ENCODE measurements at regions of chr12 and their contacts with region 1.

Region 1: DNA sequence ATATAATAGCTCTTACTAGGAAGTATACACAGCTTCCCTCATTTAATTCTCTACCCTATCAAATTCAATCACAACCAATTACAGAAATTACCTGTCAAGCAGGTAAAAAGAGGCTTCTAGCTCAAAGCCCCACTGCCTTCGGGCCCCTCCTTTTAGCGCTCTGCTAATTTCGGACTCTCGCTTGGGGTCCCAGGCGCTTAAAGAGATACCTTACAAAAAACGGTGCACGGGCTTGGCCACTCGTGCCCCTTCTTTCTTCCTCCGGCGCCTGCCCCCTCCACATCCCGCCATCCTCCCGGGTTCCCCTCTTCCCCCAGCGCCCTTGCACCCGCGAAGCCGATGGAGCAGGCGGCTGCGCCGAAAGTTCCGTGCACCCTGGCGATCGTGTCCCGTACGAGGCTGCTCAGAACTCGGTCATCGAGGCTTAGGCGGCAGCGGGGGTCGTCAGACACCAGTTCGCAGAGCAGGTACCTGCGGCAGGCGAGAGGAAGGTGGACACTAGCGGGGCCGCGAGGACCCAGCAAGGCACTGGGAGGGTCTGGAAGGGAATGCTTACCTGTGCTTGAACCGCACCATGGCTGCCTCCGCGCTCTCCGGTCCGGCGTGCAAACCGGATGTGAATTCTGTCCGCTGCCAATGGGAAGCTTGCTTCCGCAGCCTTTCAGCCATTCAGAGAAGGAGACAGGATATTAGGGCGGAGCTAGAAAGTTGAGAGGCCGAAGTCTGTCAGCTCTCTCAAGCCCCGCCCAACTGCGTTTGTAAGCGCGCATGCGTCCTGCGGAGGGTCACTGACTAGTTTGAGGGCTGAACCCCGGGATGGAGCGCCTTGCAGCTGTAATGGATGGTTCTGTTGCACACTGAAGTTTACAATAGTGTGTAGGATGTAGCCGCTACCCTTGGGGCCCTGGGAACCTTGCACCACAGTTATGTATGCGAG is at the start of gene POP5:
- DNase-seq: peak; percentile 90 to 98
- H3K4me3 ChIP-seq: peak within 1 kb of the TSS; percentile 63 to 87
- H3K27ac ChIP-seq: peak within 1 kb of the TSS; percentile 56 to 69
- H3K4me1 ChIP-seq: peaks cover 3% of the 10 kb centered on the region in 2 donors
- H3K27me3 ChIP-seq: no peaks in the 10 kb centered on the region
- CTCF ChIP-seq: no peak
- total RNA-seq, gene POP5: 3.0 TPM

Region 2: GRCh38 chr12:120495723-120496412 is 85.2 kb before region 1 on chr12 and contains the start of gene DYNLL1:
- intact Hi-C with region 1: loop called (anchors 2 kb)
- DNase-seq: peak; percentile 85 to 97
- H3K4me3 ChIP-seq: peak within 1 kb of the TSS; percentile 83 to 86
- H3K27ac ChIP-seq: peak within 1 kb of the TSS; percentile 82 to 86
- H3K4me1 ChIP-seq: peaks cover 6 to 9% of the 10 kb centered on the region in 2 donors
- H3K27me3 ChIP-seq: no peaks in the 10 kb centered on the region
- CTCF ChIP-seq: peak in 1 of 3 experiments; percentile 4
- total RNA-seq, gene DYNLL1: 216 TPM

Region 3: GRCh38 chr12:120598674-120599463 is 17.8 kb after region 1 on chr12:
- intact Hi-C with region 1: no loop called
- DNase-seq: no peak
- H3K4me3 ChIP-seq: no peak overlapping the region
- H3K27ac ChIP-seq: no peak overlapping the region
- H3K4me1 ChIP-seq: no peaks in the 10 kb centered on the region
- H3K27me3 ChIP-seq: no peaks in the 10 kb centered on the region
- CTCF ChIP-seq: no peak

Region 4: GRCh38 chr12:120649442-120650232 is 68.6 kb after region 1 on chr12:
- intact Hi-C with region 1: loop called (anchors 1 kb)
- DNase-seq: no peak
- H3K4me3 ChIP-seq: peak overlapping the region; percentile 48 to 65
- H3K27ac ChIP-seq: peak overlapping the region; percentile 52 to 64
- H3K4me1 ChIP-seq: peaks cover 12 to 33% of the 10 kb centered on the region in 2 donors
- H3K27me3 ChIP-seq: no peaks in the 10 kb centered on the region
- CTCF ChIP-seq: no peak

Region 5: GRCh38 chr12:120710031-120710804 is 129.2 kb after region 1 on chr12 and contains the start of gene UNC119B:
- intact Hi-C with region 1: loop called (anchors 1 kb)
- DNase-seq: peak in 1 of 2 donors; percentile 74
- H3K4me3 ChIP-seq: peak within 1 kb of the TSS; percentile 72 to 82
- H3K27ac ChIP-seq: peak within 1 kb of the TSS; percentile 72 to 86
- H3K4me1 ChIP-seq: peaks cover 0 to 9% of the 10 kb centered on the region in 2 donors
- H3K27me3 ChIP-seq: no peaks in the 10 kb centered on the region
- CTCF ChIP-seq: no peak
- total RNA-seq, gene UNC119B: 26.8 TPM

Region 6: GRCh38 chr12:120904197-120904773 is 323.2 kb after region 1 on chr12 and contains the start of gene SPPL3:
- intact Hi-C with region 1: loop called (anchors 5 kb)
- DNase-seq: peak; percentile 62 to 94
- H3K4me3 ChIP-seq: peak within 1 kb of the TSS; percentile 91 to 97
- H3K27ac ChIP-seq: peak within 1 kb of the TSS; percentile 83 to 93
- H3K4me1 ChIP-seq: peaks cover 12 to 30% of the 10 kb centered on the region in 2 donors
- H3K27me3 ChIP-seq: no peaks in the 10 kb centered on the region
- CTCF ChIP-seq: no peak
- total RNA-seq, gene SPPL3: 20.4 TPM

Region 7: DNA sequence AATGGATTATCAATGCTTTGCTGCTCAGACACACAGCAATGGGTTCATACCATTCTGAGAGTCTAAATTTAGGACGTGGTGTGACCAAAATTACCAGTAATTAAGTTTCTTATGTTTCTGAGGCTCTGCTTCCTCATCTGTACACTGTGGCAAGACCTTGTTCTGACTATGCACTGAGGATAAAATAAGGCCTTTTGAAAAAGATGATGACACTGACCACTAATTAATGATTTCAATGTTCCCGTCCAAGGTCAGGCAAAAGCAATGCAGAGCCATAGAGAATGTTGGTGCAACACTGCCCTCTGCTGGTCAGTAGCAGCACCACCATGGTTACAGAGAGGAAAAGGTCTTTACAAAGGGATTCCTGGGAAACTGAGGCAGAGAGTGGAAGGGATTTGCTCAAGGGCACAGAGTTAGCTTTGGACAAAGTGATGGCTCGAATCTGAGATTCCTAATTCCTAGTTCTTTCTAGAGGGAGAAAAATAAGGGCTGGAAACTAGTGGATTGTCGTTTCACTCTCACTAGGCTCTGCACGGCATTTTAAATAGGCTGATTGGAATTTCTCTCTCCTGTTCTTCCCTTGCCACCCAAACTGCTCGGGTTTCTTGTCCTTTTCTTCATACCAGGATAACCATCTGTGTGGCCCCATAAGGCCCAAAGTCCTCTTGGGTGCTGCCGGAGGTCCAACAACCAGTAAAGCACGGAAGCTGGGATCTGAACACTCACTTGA is 529.3 kb after region 1 on chr12:
- intact Hi-C with region 1: loop called (anchors 1 kb)
- DNase-seq: peak in 1 of 2 donors; percentile 79
- H3K4me3 ChIP-seq: no peak overlapping the region
- H3K27ac ChIP-seq: no peak overlapping the region
- H3K4me1 ChIP-seq: no peaks in the 10 kb centered on the region
- H3K27me3 ChIP-seq: no peaks in the 10 kb centered on the region
- CTCF ChIP-seq: peak; percentile 83 to 89 (median 85)